Calu3 (cell line): ENCODE measurements at regions of chr2 and their contacts with region 1.

Region 1: DNA sequence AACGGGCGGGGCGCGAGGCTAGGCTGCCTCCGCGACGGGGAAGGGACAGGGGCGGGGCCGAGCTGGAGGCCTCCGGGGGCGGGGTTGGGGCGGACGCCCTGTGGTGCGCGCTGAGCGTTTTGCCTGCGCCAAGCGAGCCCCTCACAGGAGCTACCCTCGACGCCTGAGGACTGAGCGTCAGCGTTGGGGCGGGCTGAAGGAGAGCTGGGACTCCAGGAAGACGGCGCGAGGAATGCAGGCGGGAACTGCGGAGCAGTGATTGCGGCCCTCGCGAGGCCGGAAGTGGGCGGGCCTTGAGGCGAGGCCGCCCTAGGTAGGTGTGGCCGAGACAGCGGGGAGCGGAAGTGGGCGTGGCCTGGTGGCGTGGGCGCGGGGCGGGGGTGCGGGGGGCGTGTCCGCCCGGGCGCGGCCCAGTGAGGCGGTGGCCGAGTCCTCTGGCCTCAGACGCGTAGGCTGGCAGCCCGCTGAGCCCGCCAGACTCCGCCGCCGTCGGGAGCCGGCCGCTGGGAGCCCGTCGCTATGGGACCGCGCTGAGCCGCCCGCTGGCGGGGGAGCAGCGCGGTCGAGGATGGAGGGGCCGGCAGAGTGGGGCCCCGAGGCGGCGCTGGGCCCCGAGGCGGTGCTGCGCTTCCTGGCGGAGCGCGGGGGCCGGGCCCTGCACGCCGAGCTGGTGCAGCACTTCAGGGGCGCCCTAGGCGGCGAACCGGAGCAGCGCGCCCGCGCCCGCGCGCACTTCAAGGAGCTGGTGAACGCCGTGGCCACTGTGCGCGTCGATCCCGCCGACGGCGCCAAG is at the starts of genes SEPTIN10 and SOWAHC:
- DNase-seq: peak; percentile 97
- H3K4me3 Mint-ChIP-seq: peak within 1 kb of the TSS; percentile 73
- H3K27ac Mint-ChIP-seq: peak within 1 kb of the TSS; percentile 92
- H3K4me1 Mint-ChIP-seq: peaks cover 8% of the 10 kb centered on the region
- H3K27me3 Mint-ChIP-seq: no peaks in the 10 kb centered on the region
- CTCF ChIP-seq: no peak
- total RNA-seq, gene SEPTIN10: 64.3 and 72.2 TPM in 2 replicates
- total RNA-seq, gene SOWAHC: 18.9 and 19.1 TPM in 2 replicates

Region 2: GRCh38 chr2:109376115-109376514 is 238.0 kb before region 1 on chr2:
- CTCF ChIA-PET with region 1: no interaction called
- intact Hi-C with region 1: no loop called
- DNase-seq: no peak
- H3K4me3 Mint-ChIP-seq: no peak overlapping the region
- H3K27ac Mint-ChIP-seq: no peak overlapping the region
- H3K4me1 Mint-ChIP-seq: no peaks in the 10 kb centered on the region
- H3K27me3 Mint-ChIP-seq: peaks cover 100% of the 10 kb centered on the region
- CTCF ChIP-seq: no peak

Region 3: GRCh38 chr2:109545828-109546713 is 68.0 kb before region 1 on chr2:
- CTCF ChIA-PET with region 1: interaction called, 3 read pairs
- intact Hi-C with region 1: loop called (anchors 5 kb)
- DNase-seq: peak; percentile 66
- H3K4me3 Mint-ChIP-seq: no peak overlapping the region
- H3K27ac Mint-ChIP-seq: no peak overlapping the region
- H3K4me1 Mint-ChIP-seq: no peaks in the 10 kb centered on the region
- H3K27me3 Mint-ChIP-seq: no peaks in the 10 kb centered on the region
- CTCF ChIP-seq: peak; percentile 80

Region 4: DNA sequence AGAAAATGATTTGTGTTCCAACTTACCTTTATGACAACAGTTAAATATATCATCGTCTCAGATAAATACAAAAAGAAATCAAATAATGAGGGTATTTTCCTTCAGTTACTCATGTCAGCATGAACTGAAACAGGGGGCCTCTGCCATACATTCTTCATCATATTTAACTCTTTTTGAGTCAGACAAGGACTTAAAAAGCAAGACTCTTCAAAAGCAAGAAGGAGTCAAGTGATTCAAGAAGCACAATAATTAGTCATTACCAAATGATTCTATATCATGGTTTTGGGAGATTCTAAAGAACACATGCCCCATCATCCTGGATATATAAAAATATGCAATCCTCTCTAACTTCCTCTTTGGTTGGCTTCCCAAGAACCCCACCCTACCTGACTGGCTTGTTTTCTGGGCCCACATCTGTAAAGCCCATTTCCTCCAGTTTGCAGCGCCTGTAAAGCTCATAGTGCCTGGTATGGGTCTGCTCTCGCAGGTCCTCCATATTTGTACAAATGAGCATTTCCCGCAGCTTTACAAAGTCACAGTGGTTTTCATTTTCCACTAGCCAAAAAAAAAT is 50.1 kb before region 1 on chr2:
- CTCF ChIA-PET with region 1: no interaction called
- intact Hi-C with region 1: no loop called
- DNase-seq: no peak
- H3K4me3 Mint-ChIP-seq: no peak overlapping the region
- H3K27ac Mint-ChIP-seq: no peak overlapping the region
- H3K4me1 Mint-ChIP-seq: peaks cover 22% of the 10 kb centered on the region
- H3K27me3 Mint-ChIP-seq: no peaks in the 10 kb centered on the region
- CTCF ChIP-seq: no peak

Region 5: GRCh38 chr2:109638795-109639194 is 24.7 kb after region 1 on chr2:
- CTCF ChIA-PET with region 1: no interaction called
- intact Hi-C with region 1: no loop called
- DNase-seq: no peak
- H3K4me3 Mint-ChIP-seq: no peak overlapping the region
- H3K27ac Mint-ChIP-seq: no peak overlapping the region
- H3K4me1 Mint-ChIP-seq: peaks cover 9% of the 10 kb centered on the region
- H3K27me3 Mint-ChIP-seq: no peaks in the 10 kb centered on the region
- CTCF ChIP-seq: no peak

Region 6: GRCh38 chr2:109663721-109664120 is 49.6 kb after region 1 on chr2:
- CTCF ChIA-PET with region 1: interaction called, 3 read pairs
- intact Hi-C with region 1: loop called (anchors 5 kb)
- DNase-seq: no peak
- H3K4me3 Mint-ChIP-seq: no peak overlapping the region
- H3K27ac Mint-ChIP-seq: no peak overlapping the region
- H3K4me1 Mint-ChIP-seq: no peaks in the 10 kb centered on the region
- H3K27me3 Mint-ChIP-seq: peaks cover 9% of the 10 kb centered on the region
- CTCF ChIP-seq: no peak

Region 7: DNA sequence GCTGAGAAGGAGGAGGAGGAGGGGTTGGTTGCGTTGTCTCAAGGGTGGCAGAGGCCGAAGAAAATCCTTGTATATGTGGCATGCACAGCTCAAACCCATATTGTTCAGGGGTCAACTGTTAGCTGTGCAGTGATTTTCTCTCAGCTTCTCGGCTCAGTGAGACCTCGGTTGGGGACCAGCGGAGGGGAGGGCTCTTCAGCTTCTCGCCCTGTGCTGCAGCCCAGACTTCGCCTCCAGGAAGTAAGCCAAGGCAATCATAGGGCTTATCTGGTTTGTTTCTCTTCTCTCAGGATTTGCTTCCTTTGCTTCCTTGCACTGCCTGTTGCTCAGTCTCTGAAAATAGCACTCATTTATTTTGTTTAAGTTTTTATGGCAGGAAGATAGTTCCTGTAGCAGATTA is 85.5 kb after region 1 on chr2:
- CTCF ChIA-PET with region 1: interaction called, 4 read pairs
- intact Hi-C with region 1: loop called (anchors 2 kb)
- DNase-seq: peak; percentile 29
- H3K4me3 Mint-ChIP-seq: peak overlapping the region; percentile 8
- H3K27ac Mint-ChIP-seq: peak overlapping the region; percentile 46
- H3K4me1 Mint-ChIP-seq: peaks cover 69% of the 10 kb centered on the region
- H3K27me3 Mint-ChIP-seq: no peaks in the 10 kb centered on the region
- CTCF ChIP-seq: no peak

Region 8: DNA sequence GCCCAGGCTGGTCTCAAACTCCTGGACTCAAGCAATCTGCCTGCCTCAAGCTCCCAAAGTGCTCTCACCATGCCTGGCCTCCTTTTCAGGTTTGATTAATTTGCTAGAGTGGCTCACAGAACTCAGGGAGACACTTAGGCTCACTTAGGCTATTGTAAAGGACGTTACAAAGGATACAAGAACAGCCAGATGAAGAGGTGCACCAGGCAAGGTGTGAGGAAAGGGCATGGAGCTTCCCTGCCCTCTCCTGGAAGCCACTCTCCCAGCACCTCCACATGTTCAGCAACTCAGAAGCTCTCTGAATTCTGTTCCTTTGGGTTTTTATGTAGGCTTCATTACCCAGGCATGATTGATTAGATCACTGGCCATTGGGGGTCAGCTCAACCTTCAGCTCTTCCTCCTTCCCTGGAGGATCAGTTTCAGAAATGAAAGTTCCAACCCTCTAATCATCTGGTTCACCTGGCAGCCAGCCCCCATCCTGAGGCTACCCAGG is 101.2 kb after region 1 on chr2:
- CTCF ChIA-PET with region 1: interaction called, 3 read pairs
- intact Hi-C with region 1: loop called (anchors 5 kb)
- DNase-seq: peak; percentile 45
- H3K4me3 Mint-ChIP-seq: no peak overlapping the region
- H3K27ac Mint-ChIP-seq: no peak overlapping the region
- H3K4me1 Mint-ChIP-seq: no peaks in the 10 kb centered on the region
- H3K27me3 Mint-ChIP-seq: no peaks in the 10 kb centered on the region
- CTCF ChIP-seq: peak; percentile 56

Region 9: DNA sequence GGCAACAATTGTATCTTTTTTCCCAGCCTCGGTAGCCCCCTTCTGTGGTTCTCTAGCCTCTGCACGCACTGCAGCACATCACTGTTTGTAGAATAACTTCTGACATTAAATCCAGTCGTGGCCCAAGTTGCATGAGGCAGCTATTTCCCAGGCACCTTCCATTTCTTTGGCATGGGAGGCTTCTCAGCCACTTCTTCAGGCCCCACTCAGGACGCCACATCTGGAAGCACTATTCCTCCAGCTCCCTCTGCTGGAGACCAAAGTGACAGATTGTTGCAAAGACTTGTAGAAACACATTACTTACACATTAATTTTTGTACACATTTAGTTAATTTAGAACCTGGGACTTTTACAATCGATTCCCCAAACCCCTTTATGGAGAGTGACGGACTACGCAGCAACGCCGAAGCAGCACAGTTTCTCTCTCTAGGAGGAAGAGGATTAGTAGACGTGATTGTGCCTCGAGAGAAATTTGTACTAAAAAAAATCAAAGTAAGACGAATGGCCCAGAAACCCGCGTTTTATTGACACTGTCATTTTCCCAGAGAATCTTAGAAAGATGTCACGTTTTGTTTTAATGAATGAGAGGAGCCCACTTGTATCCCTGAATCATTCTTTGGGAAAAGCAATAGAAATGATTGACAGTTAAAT is 122.2 kb after region 1 on chr2:
- CTCF ChIA-PET with region 1: no interaction called
- intact Hi-C with region 1: loop called (anchors 2 kb)
- DNase-seq: peak; percentile 54
- H3K4me3 Mint-ChIP-seq: no peak overlapping the region
- H3K27ac Mint-ChIP-seq: no peak overlapping the region
- H3K4me1 Mint-ChIP-seq: no peaks in the 10 kb centered on the region
- H3K27me3 Mint-ChIP-seq: no peaks in the 10 kb centered on the region
- CTCF ChIP-seq: peak; percentile 79